HepG2 (cell line): ENCODE measurements at regions of chr2 and their contacts with region 1.

Region 1: DNA sequence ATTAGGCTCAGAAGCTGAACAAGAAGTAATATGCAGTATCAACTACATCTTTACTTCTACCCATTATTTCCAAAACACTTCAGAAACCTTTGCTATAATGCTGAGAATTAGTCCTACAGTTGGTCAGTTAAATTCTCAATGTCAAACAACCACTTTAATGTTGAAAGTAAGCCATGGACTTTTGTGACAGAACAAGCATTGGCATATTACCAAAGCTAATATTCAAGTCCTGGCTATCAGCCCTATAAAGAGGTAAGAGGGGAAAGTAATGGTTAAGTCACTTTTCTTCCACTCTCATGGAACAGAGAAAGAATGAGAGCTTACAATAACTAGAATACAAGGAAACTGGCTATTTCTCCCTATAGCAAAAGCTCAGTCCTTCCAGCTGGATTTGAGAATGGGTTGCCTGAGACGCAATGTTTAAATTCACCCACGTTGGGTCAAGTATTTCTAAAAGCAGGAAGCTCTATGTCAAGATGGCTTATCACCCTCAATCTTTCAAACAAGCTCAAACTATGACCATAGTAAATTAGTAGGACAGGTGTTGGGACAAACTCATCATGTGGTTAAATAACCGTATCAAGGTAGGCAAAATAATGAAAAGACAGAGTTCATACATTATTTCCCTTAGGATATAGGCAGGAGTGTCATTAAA is 31.4 kb upstream of the MFSD6 start:
- DNase-seq: no peak
- ATAC-seq: no peak
- H3K4me3 ChIP-seq: no peak overlapping the region
- H3K27ac ChIP-seq: no peak overlapping the region
- H3K4me1 ChIP-seq: peaks cover 45% of the 10 kb centered on the region
- H3K27me3 ChIP-seq: no peaks in the 10 kb centered on the region; a peak in 1 of 5 replicates
- CTCF ChIP-seq: no peak
- EP300 ChIP-seq: no peak
- POLR2A ChIP-seq: no peak
- RAD21 ChIP-seq: no peak

Region 2: GRCh38 chr2:190328573-190329147 is 48.1 kb before region 1 on chr2:
- CTCF ChIA-PET with region 1: interaction called, 9 read pairs
- POLR2A ChIA-PET with region 1: no interaction called
- in situ Hi-C with region 1: loop called (anchors 5 kb)
- intact Hi-C with region 1: loop called (anchors 1 kb)
- DNase-seq: peak; percentile 47
- ATAC-seq: peak; percentile 51
- H3K4me3 ChIP-seq: no peak overlapping the region
- H3K27ac ChIP-seq: no peak overlapping the region
- H3K4me1 ChIP-seq: peaks cover 16% of the 10 kb centered on the region
- H3K27me3 ChIP-seq: no peaks in the 10 kb centered on the region
- CTCF ChIP-seq: peak; percentile 48
- EP300 ChIP-seq: no peak
- POLR2A ChIP-seq: no peak
- RAD21 ChIP-seq: peak; percentile 37; the same call in 1 of the 2 replicates

Region 3: GRCh38 chr2:190334479-190335224 is 42.1 kb before region 1 on chr2:
- CTCF ChIA-PET with region 1: no interaction called
- POLR2A ChIA-PET with region 1: no interaction called
- in situ Hi-C with region 1: loop called (anchors 5 kb)
- intact Hi-C with region 1: loop called (anchors 1 kb)
- DNase-seq: peak; percentile 96
- ATAC-seq: peak; percentile 96
- H3K4me3 ChIP-seq: peak overlapping the region; percentile 59 to 70 (median 67); a peak in 5 of 6 replicates
- H3K27ac ChIP-seq: peak overlapping the region; percentile 84
- H3K4me1 ChIP-seq: peaks cover 54% of the 10 kb centered on the region
- H3K27me3 ChIP-seq: no peaks in the 10 kb centered on the region
- CTCF ChIP-seq: 0 out of 2 replicates have a peak, but pooled peaks have one; percentile 25
- EP300 ChIP-seq: peak; percentile 85 to 96
- POLR2A ChIP-seq: peak; percentile 72 to 77
- RAD21 ChIP-seq: no peak

Region 4: GRCh38 chr2:190343500-190344275 is 33.0 kb before region 1 on chr2 and contains the start of gene INPP1:
- CTCF ChIA-PET with region 1: interaction called, 31 read pairs
- POLR2A ChIA-PET with region 1: interaction called, 3 read pairs
- in situ Hi-C with region 1: no loop called
- intact Hi-C with region 1: loop called (anchors 1 kb)
- DNase-seq: no peak
- ATAC-seq: peak; percentile 88
- H3K4me3 ChIP-seq: peak within 1 kb of the TSS; percentile 71 to 92 (median 75)
- H3K27ac ChIP-seq: peak within 1 kb of the TSS; percentile 59
- H3K4me1 ChIP-seq: peaks cover 50% of the 10 kb centered on the region
- H3K27me3 ChIP-seq: no peaks in the 10 kb centered on the region
- CTCF ChIP-seq: no peak
- EP300 ChIP-seq: no peak
- POLR2A ChIP-seq: peak in 1 of 2 experiments; percentile 30; a peak in 1 of 4 replicates
- RAD21 ChIP-seq: peak; percentile 77; the same call in 1 of the 2 replicates
- total RNA-seq, gene INPP1: 13.3 and 15.2 TPM in 2 replicates

Region 5: DNA sequence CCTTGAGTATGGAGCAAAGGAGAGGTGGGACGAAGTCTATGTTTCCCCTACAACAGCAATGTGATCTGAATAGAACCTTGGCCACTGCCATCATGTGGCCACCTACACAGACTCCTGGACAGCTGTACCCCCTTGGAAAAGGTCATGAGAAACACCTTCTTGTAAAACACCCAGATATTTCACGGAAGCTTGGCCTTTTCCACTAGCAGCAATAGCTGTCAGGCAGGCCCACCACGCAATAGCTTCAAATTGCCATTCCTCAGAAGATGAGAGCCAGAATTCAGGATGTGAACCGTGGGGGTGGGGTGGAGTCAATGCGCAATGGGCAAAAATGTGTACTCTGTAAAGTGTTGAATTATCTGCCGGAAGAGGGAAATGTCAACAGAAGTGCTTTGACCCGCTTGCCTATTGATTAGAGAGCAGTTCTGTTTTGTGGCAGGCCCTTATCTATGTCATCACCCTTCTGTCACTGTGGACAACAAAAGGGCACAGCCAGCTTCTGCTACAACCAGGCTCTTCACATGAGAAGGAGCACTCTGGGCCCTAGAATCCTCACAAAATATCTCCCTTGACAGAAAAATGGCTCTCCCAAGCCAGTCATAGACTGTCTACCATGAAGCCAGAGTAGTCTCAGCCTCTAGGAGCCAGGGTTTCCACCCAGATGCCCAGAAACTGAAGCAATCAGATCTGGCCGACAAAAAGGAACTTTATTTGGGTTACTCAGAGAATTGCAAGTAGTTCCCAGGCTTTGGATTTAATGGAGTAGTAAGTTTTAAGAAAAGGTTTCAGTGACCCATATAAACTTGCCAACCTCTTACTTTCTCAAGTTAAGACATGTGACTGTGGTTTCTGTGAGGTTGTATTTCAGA is 23.8 kb before region 1 on chr2:
- CTCF ChIA-PET with region 1: no interaction called
- POLR2A ChIA-PET with region 1: no interaction called
- in situ Hi-C with region 1: no loop called
- intact Hi-C with region 1: loop called (anchors 2 kb)
- DNase-seq: peak; percentile 99
- ATAC-seq: peak; percentile 98
- H3K4me3 ChIP-seq: peak overlapping the region in 2 of 3 experiments; percentile 24 to 41; a peak in 3 of 6 replicates
- H3K27ac ChIP-seq: peak overlapping the region; percentile 85
- H3K4me1 ChIP-seq: peaks cover 76% of the 10 kb centered on the region
- H3K27me3 ChIP-seq: no peaks in the 10 kb centered on the region
- CTCF ChIP-seq: peak; percentile 28; the same call in 1 of the 2 replicates
- EP300 ChIP-seq: peak; percentile 79 to 98; a peak in 3 of 4 replicates
- POLR2A ChIP-seq: peak in 1 of 2 experiments; percentile 32; a peak in 1 of 4 replicates
- RAD21 ChIP-seq: peak; percentile 49

Region 6: DNA sequence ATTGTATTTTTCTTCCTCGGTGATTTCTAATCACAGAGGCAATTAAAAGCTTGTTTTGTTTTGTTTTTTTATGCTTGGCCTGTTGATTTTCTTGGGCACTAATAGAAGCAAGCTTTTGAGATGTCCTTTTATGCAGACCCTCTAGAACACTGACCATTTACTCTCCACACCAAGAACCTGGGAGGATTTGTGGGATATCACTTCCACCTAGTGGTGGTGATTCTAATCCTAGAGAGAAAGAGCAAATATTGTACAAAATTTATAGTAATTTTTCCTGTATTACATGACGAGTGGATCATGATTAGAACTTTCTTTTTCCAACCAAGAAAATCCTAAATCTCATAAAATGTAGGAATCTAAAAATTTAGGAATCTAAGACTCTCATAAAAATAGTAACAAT is 134.4 kb after region 1 on chr2:
- CTCF ChIA-PET with region 1: no interaction called
- POLR2A ChIA-PET with region 1: no interaction called
- in situ Hi-C with region 1: no loop called
- intact Hi-C with region 1: loop called (anchors 2 kb)
- DNase-seq: peak; percentile 54
- ATAC-seq: peak; percentile 67
- H3K4me3 ChIP-seq: no peak overlapping the region
- H3K27ac ChIP-seq: no peak overlapping the region
- H3K4me1 ChIP-seq: no peaks in the 10 kb centered on the region
- H3K27me3 ChIP-seq: no peaks in the 10 kb centered on the region
- CTCF ChIP-seq: peak; percentile 63
- EP300 ChIP-seq: no peak
- POLR2A ChIP-seq: no peak
- RAD21 ChIP-seq: peak; percentile 64

Region 7: GRCh38 chr2:190599073-190599472 is 222.4 kb after region 1 on chr2:
- CTCF ChIA-PET with region 1: no interaction called
- POLR2A ChIA-PET with region 1: no interaction called
- in situ Hi-C with region 1: no loop called
- intact Hi-C with region 1: no loop called
- DNase-seq: no peak
- ATAC-seq: no peak
- H3K4me3 ChIP-seq: no peak overlapping the region
- H3K27ac ChIP-seq: no peak overlapping the region
- H3K4me1 ChIP-seq: no peaks in the 10 kb centered on the region
- H3K27me3 ChIP-seq: peaks cover 0 to 10% of the 10 kb centered on the region in 2 experiments; a peak in 1 of 5 replicates
- CTCF ChIP-seq: no peak
- EP300 ChIP-seq: no peak
- POLR2A ChIP-seq: no peak
- RAD21 ChIP-seq: no peak

Region 8: DNA sequence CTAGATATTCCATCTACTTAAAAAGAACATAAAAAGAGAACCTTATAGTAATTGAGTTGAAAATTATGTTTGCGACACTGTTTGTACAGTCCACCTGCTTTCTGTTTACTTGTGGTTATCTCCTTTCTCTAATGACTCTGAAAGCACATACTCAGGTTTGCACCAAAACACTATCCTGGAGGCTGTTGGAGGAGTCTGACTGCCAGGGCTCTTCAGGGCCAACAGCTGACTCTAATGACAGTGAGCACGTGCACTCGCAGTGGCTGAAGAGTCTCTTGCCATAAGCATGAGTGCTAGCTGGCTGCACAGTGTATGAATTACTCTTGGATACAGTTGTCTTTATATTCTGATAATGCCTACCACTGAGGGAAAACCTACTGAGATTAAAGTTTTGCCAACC is 487.2 kb after region 1 on chr2:
- CTCF ChIA-PET with region 1: no interaction called
- POLR2A ChIA-PET with region 1: no interaction called
- in situ Hi-C with region 1: no loop called
- intact Hi-C with region 1: no loop called
- DNase-seq: no peak
- ATAC-seq: peak; percentile 73
- H3K4me3 ChIP-seq: no peak overlapping the region
- H3K27ac ChIP-seq: no peak overlapping the region
- H3K4me1 ChIP-seq: peaks cover 26% of the 10 kb centered on the region
- H3K27me3 ChIP-seq: peaks cover 0 to 14% of the 10 kb centered on the region in 2 experiments; a peak in 2 of 5 replicates
- CTCF ChIP-seq: no peak
- EP300 ChIP-seq: no peak
- POLR2A ChIP-seq: no peak
- RAD21 ChIP-seq: no peak